Esophagus muscularis mucosa (tissue), 4 donors: ENCODE measurements at regions of chr1 and their contacts with region 1.

Region 1: GRCh38 chr1:159938211-159938852 is 7.1 kb downstream of the IGSF9 start:
- DNase-seq: no peak
- H3K4me3 ChIP-seq: no peak overlapping the region
- H3K27ac ChIP-seq: no peak overlapping the region
- H3K4me1 ChIP-seq: peaks cover 0 to 8% (median 8%) of the 10 kb centered on the region in 4 donors
- H3K27me3 ChIP-seq: peaks cover 0 to 40% (median 0%) of the 10 kb centered on the region in 4 donors
- CTCF ChIP-seq: no peak
- EP300 ChIP-seq: no peak
- POLR2A ChIP-seq: no peak

Region 2: DNA sequence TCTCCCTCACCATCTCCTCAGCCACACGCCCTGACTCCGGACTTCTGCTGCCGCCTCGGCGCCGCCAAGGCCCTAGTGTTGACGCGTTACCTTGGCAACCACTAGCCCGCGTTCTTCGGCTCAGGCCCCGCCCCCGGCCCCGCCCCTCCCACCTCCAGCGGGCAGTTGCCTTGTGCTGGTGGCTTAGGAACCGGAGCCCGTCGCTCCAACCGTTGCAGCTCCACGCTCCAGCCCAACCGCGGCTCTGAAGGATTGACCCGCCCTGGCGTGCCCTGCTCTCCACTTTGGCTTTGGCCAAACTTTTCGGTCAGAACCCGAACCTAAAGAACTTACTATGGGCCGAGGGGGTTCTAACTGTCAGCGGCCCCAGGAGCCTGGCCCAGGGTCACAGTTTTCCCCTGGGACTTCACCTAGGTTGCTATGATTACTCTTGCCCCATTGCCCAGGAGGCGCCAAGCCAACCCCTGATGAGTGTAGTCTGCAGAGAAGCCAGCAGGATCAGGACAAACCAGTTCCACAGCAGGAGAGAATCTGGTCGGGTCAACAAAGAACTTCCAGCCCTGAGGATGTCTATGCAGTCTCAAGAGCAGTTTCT is 38.1 kb before region 1 on chr1 and contains the start of gene CFAP45:
- intact Hi-C with region 1: no loop called
- DNase-seq: peak; percentile 94
- H3K4me3 ChIP-seq: peak within 1 kb of the TSS in 3 of 4 donors; percentile 5 to 27 (median 24)
- H3K27ac ChIP-seq: peak within 1 kb of the TSS in 3 of 4 donors; percentile 47 to 59 (median 53)
- H3K4me1 ChIP-seq: peaks cover 11 to 20% (median 15%) of the 10 kb centered on the region in 4 donors
- H3K27me3 ChIP-seq: no peaks in the 10 kb centered on the region
- CTCF ChIP-seq: no peak
- EP300 ChIP-seq: no peak
- POLR2A ChIP-seq: no peak
- total RNA-seq, gene CFAP45: 0.17 to 0.32 TPM in 2 of 4 donors, not detected in the others

Region 3: DNA sequence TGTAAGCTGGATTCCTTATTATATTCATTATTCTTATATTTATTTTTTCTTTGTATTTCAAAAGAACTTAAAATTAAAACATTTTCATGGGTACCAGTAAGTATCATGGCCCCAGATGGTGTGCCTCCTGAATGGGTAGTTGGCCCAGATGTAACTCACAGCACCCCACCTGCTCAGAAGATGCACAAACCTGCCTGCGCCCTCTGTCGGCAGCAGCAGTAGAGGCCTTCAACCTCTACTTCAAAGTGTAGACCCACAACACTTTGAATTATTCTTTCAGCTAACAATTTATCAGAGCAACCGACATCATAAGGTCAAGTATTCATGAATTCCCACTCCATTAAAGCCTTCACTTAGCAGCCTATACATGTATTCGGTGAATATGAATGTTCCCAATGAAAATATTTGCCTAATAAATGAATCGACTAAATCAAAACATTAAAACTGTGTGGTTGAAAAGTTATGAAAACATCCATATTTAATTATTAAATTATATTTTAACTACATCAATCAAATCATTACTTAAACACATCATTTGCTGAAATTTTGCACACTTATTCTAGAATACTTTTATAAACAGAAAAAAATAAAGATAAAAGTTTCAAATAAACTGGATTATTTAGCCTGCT is 68.1 kb after region 1 on chr1:
- intact Hi-C with region 1: loop called (anchors 1 kb)
- DNase-seq: no peak
- H3K4me3 ChIP-seq: no peak overlapping the region
- H3K27ac ChIP-seq: no peak overlapping the region
- H3K4me1 ChIP-seq: no peaks in the 10 kb centered on the region
- H3K27me3 ChIP-seq: peaks cover 0 to 10% (median 0%) of the 10 kb centered on the region in 4 donors
- CTCF ChIP-seq: peak; percentile 66 to 82 (median 69)
- EP300 ChIP-seq: no peak
- POLR2A ChIP-seq: no peak